Common myeloid progenitor, CD34-positive (primary cell): ENCODE measurements at regions of chr18 and their contacts with region 1.

Region 1: GRCh38 chr18:3995476-3996102 is 459.5 kb downstream of the DLGAP1 start:
- DNase-seq: peak; percentile 86 to 95 (median 90)
- H3K4me3 ChIP-seq: no peak overlapping the region
- H3K27ac ChIP-seq: no peak overlapping the region
- H3K4me1 ChIP-seq: peaks cover 0 to 21% (median 4%) of the 10 kb centered on the region in 4 experiments
- H3K27me3 ChIP-seq: no peaks in the 10 kb centered on the region

Region 2: GRCh38 chr18:2316751-2317696 is 1678.6 kb before region 1 on chr18:
- CTCF ChIA-PET with region 1: no interaction called
- POLR2A ChIA-PET with region 1: no interaction called
- DNase-seq: no peak
- H3K4me3 ChIP-seq: no peak overlapping the region
- H3K27ac ChIP-seq: no peak overlapping the region
- H3K4me1 ChIP-seq: no peaks in the 10 kb centered on the region
- H3K27me3 ChIP-seq: peaks cover 0 to 2% (median 0%) of the 10 kb centered on the region in 5 experiments

Region 3: GRCh38 chr18:3683483-3683882 is 312.1 kb before region 1 on chr18:
- CTCF ChIA-PET with region 1: no interaction called
- POLR2A ChIA-PET with region 1: no interaction called
- DNase-seq: no peak
- H3K4me3 ChIP-seq: no peak overlapping the region
- H3K27ac ChIP-seq: no peak overlapping the region
- H3K4me1 ChIP-seq: no peaks in the 10 kb centered on the region
- H3K27me3 ChIP-seq: no peaks in the 10 kb centered on the region

Region 4: DNA sequence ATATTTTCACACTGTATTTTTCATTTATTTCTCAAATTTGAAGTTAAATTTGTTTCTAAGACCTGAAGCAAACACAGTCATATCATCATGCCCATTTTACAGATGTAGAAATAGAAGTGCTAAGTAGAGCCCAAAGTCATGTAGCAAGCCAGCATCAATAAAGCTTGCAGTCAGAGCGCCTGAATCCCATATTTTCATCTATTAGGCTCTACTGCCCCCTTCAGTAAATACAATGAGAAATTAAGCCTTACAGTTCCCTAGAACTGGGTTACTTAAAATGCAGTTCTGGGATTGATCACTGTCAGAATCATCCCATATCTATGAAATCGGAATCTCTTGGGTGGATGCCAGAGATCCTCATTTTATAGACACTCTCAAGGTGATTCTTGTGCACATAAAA is 125.7 kb before region 1 on chr18:
- CTCF ChIA-PET with region 1: interaction called, 15 read pairs
- POLR2A ChIA-PET with region 1: no interaction called
- DNase-seq: peak; percentile 65 to 77 (median 75)
- H3K4me3 ChIP-seq: no peak overlapping the region
- H3K27ac ChIP-seq: no peak overlapping the region
- H3K4me1 ChIP-seq: peaks cover 0 to 4% (median 1%) of the 10 kb centered on the region in 4 experiments
- H3K27me3 ChIP-seq: peaks cover 0 to 2% (median 0%) of the 10 kb centered on the region in 5 experiments

Region 5: DNA sequence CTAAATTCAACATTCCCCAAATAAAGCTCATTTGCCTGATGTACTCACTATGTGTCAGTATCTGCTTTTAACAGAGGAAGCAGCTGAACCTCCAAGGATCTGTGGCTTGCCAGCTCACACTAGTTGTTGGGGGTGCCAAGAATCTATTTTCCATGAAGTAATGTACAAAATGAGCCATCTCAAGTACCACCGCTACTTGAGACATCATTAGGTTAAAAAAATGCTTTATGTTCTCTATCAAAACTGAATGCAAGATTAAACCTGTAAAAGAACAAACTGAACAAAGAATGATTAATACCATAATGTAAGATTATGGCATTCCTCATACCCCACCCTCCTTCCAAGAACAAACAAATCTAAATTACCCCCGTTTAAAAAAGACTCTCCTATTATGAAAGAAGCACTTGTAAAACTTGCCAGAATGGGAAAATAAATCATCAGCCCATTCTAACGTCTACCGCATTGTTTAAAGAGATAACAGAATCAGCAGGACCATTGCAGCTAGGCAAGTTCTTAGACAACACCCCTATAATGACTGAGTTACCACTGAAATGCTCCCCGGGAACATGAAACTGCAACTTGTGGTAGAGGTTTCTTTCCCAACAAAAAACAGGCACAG is 12.1 kb before region 1 on chr18:
- CTCF ChIA-PET with region 1: interaction called, 12 read pairs
- POLR2A ChIA-PET with region 1: no interaction called
- DNase-seq: peak; percentile 58 to 88 (median 84)
- H3K4me3 ChIP-seq: no peak overlapping the region
- H3K27ac ChIP-seq: no peak overlapping the region
- H3K4me1 ChIP-seq: peaks cover 0 to 28% (median 6%) of the 10 kb centered on the region in 4 experiments
- H3K27me3 ChIP-seq: no peaks in the 10 kb centered on the region

Region 6: DNA sequence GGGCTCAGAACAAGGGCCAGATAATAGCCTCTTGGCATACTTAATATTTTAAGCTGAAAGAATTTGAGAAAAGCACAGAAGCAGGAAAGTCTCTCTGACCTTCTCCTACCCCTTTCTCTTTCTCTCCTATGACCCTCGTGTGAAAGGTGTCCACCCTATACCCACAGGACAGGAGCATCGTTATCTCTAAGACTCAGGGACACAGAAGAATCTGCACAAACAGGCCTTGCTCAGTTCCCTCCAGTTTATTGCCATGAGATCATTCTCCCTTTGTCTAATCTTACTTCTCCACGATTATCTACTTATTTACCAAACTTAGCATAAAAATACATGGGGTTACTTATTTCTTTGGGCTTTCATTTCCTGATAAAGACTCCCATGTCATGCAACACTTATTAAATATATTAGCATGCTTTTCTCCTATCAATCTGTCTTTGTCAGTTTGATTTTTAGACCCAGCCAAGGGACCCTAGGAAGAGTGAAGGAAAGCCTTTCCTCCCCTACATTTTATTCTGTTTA is 88.9 kb after region 1 on chr18:
- CTCF ChIA-PET with region 1: no interaction called
- POLR2A ChIA-PET with region 1: no interaction called
- DNase-seq: no peak
- H3K4me3 ChIP-seq: no peak overlapping the region
- H3K27ac ChIP-seq: no peak overlapping the region
- H3K4me1 ChIP-seq: peaks cover 0 to 3% (median 0%) of the 10 kb centered on the region in 4 experiments
- H3K27me3 ChIP-seq: no peaks in the 10 kb centered on the region